Left colon (tissue), 2 donors: ENCODE measurements at regions of chr14 and their contacts with region 1.

Region 1: GRCh38 chr14:63795532-63795931 is 57.3 kb upstream of the SYNE2 start:
- DNase-seq: no peak
- ATAC-seq: no peak

Region 2: GRCh38 chr14:63938198-63939005 is 142.9 kb after region 1 on chr14:
- intact Hi-C with region 1: no loop called
- DNase-seq: no peak
- ATAC-seq: no peak

Region 3: DNA sequence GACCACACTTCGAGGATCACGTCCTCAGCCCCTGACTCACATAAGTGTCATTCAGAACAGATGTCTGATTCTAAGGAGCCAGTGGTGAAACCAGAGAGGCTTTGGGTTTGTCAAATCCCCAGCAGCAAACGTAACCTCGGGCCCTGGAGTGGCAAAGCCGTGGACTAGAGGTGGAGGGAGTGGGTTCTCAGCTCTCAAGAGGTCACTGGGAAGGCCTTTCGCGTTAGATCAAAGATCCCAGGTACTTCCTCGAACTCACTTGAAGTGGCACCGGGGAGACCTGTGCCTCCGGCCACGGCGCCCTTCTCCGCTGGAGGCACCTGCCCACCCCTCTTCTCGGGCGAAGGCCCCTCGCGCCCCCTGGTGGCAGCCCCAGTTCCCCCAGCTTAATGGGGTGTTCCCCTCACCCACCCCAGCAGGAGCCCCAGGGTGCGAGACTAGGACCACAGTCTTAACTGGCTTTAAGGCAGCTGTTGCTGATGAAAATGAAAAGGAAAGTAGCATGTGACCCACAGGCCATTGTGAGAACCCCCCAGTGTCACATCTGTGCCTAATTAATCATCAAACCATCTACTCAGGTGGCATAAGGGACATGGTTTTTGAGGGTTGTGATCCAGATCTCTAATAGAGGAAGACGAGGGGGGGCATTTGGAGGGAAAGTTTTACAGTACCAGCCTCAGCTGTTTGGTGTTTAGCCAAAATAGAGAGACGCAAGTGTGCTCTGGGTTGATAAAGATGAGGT is 499.3 kb after region 1 on chr14:
- intact Hi-C with region 1: loop called in 1 of 2 experiments (anchors 10 kb)
- DNase-seq: peak; percentile 72 to 87
- ATAC-seq: peak; percentile 92